WTC11 (cell line): ENCODE measurements at regions of chr14 and their contacts with region 1.

Region 1: GRCh38 chr14:96698960-96699539 is 98.1 kb upstream of the VRK1 start:
- DNase-seq: no peak
- ATAC-seq: no peak
- H3K4me3 Mint-ChIP-seq: no peak overlapping the region
- H3K27ac Mint-ChIP-seq: no peak overlapping the region
- H3K4me1 Mint-ChIP-seq: peaks cover 13% of the 10 kb centered on the region
- H3K27me3 Mint-ChIP-seq: peaks cover 6% of the 10 kb centered on the region
- CTCF ChIP-seq: no peak; the same call in 1 of the 2 replicates

Region 2: GRCh38 chr14:96584199-96584906 is 114.7 kb before region 1 on chr14:
- CTCF ChIA-PET with region 1: no interaction called
- POLR2A ChIA-PET with region 1: no interaction called
- DNase-seq: peak; percentile 86
- ATAC-seq: peak; percentile 91
- H3K4me3 Mint-ChIP-seq: no peak overlapping the region
- H3K27ac Mint-ChIP-seq: no peak overlapping the region
- H3K4me1 Mint-ChIP-seq: peaks cover 44% of the 10 kb centered on the region
- H3K27me3 Mint-ChIP-seq: no peaks in the 10 kb centered on the region
- CTCF ChIP-seq: peak; percentile 49; the same call in 1 of the 2 replicates

Region 3: DNA sequence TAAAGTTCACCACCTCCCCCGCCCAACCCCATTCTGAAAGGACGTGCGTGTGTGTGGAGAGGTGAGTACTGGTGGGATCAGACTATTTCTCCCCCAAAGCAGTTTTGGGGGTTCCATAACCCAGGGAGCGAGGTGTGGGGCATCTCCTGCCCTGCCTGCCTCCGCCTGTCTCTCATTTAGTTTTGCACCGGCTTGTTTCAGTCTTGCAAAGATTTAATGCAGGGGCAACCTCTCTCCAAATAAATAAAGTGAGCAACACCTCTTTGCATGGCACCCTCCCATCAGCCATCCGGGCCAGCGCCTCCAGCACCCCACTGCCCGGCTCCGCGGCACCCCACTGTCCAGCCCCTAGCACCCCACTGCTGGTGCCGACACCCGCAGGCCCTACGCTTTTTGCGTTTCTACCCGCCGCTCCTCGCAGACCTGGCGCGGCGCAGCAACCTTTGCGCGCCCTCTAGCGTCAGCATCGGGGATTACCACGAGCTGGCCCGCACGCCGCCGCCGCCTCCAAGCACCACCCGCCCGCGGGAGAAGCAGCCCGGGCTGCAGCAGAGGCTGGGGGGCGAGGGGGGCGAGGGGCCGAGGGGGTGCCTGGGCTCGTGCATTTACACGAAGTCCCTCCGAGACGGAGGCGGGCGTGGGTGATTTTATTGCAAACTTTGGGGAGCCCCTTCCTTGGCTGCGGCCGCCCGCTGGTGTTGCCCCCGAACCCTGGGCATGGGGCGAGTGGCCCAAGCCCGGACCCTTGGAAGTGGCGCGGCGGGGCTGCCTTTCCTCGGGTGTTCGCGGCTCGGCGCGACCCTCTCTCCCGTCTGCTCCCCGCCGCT is 42.3 kb after region 1 on chr14:
- CTCF ChIA-PET with region 1: interaction called, 14 read pairs
- POLR2A ChIA-PET with region 1: no interaction called
- DNase-seq: peak; percentile 79
- ATAC-seq: peak; percentile 77
- H3K4me3 Mint-ChIP-seq: peak overlapping the region; percentile 83
- H3K27ac Mint-ChIP-seq: no peak overlapping the region
- H3K4me1 Mint-ChIP-seq: peaks cover 50% of the 10 kb centered on the region
- H3K27me3 Mint-ChIP-seq: peaks cover 6% of the 10 kb centered on the region
- CTCF ChIP-seq: peak; percentile 99